SK-N-SH (cell line): ENCODE measurements at regions of chr10 and their contacts with region 1.

Region 1: DNA sequence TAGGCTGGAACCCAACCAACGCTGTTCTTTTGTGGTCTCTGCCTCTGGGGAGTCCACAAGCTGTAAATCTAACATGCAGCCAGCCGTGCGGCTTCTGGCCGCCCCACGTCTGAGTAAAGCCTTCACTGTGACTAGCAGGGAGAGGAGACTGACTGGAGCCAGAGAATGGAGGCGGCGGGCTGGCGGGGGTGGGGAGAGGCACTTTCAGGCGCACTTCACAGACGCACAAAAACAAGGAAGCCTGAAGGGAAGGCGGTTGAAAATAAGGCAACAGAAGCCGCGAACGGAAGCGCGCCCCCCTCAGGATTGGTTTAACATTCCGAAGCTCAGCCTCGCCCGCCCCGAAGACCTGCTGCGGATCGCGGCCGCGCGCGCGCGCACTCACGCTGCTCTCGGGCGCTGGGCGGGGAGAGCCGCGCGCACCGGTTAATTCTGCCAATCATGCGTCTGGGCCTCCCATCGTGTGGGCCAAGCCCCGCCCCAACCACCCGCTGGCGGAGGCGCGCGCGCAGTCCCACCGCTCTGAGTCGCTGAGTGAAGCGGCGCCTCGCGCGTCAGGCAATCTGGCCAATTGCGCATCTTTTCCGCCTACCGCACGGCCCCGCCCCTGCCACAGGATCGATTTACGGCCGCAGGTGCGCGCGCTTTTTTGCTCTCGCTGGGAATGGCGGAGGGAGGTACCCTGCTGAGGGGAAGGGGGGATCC is at the start of gene SFR1:
- DNase-seq: peak; percentile 96
- H3K4me3 ChIP-seq: peak within 1 kb of the TSS; percentile 96 to 98
- H3K27ac ChIP-seq: peak within 1 kb of the TSS; percentile 99 to 100
- H3K4me1 ChIP-seq: peaks cover 0 to 11% of the 10 kb centered on the region in 2 experiments; a peak in 3 of 4 replicates
- H3K27me3 ChIP-seq: no peaks in the 10 kb centered on the region
- CTCF ChIP-seq: peak; percentile 68
- EP300 ChIP-seq: peak; percentile 15 to 40; a peak in 2 of 4 replicates
- RAD21 ChIP-seq: peak; percentile 53
- polyA plus RNA-seq, gene SFR1: 1.5 and 1.8 TPM in 2 replicates

Region 2: GRCh38 chr10:103966671-103967447 is 154.8 kb before region 1 on chr10 and contains the start of gene SLK:
- CTCF ChIA-PET with region 1: interaction called, 11 read pairs
- POLR2A ChIA-PET with region 1: interaction called, 3 read pairs
- DNase-seq: peak; percentile 96
- H3K4me3 ChIP-seq: peak within 1 kb of the TSS; percentile 79 to 95
- H3K27ac ChIP-seq: peak within 1 kb of the TSS; percentile 74 to 90
- H3K4me1 ChIP-seq: peaks cover 9 to 10% of the 10 kb centered on the region in 2 experiments; a peak in 3 of 4 replicates
- H3K27me3 ChIP-seq: no peaks in the 10 kb centered on the region
- CTCF ChIP-seq: no peak
- EP300 ChIP-seq: no peak
- RAD21 ChIP-seq: no peak
- polyA plus RNA-seq, gene SLK: 3.4 and 4.0 TPM in 2 replicates

Region 3: GRCh38 chr10:104045151-104046089 is 76.3 kb before region 1 on chr10:
- CTCF ChIA-PET with region 1: interaction called, 11 read pairs
- POLR2A ChIA-PET with region 1: interaction called, 4 read pairs
- DNase-seq: peak; percentile 74
- H3K4me3 ChIP-seq: no peak overlapping the region
- H3K27ac ChIP-seq: no peak overlapping the region
- H3K4me1 ChIP-seq: peaks cover 0 to 2% of the 10 kb centered on the region in 2 experiments; a peak in 1 of 4 replicates
- H3K27me3 ChIP-seq: no peaks in the 10 kb centered on the region
- CTCF ChIP-seq: peak; percentile 77
- EP300 ChIP-seq: no peak
- RAD21 ChIP-seq: peak; percentile 89

Region 4: GRCh38 chr10:104104926-104105325 is 16.7 kb before region 1 on chr10:
- CTCF ChIA-PET with region 1: interaction called, 13 read pairs
- POLR2A ChIA-PET with region 1: no interaction called
- DNase-seq: no peak
- H3K4me3 ChIP-seq: no peak overlapping the region
- H3K27ac ChIP-seq: no peak overlapping the region
- H3K4me1 ChIP-seq: no peaks in the 10 kb centered on the region
- H3K27me3 ChIP-seq: no peaks in the 10 kb centered on the region
- CTCF ChIP-seq: no peak
- EP300 ChIP-seq: no peak
- RAD21 ChIP-seq: no peak

Region 5: DNA sequence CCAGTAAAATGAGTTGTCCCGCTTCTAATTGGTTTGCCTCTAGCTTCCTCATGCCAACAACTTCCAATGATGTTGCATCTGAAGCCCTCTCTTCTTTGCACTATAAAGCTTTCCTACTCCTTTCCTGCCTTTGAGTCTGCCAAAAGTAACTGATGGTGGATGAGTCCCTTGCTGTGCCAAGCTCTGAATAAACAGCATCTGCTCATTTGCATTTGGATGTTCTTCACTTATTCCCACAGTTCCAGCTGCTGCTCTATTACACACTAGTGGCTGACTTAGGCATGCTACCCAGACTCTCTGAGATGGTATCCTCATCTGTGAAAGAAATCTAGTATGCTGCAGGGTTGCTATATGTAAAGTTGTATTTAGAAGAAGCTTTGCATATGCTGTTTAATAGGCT is 25.2 kb after region 1 on chr10:
- CTCF ChIA-PET with region 1: interaction called, 10 read pairs
- POLR2A ChIA-PET with region 1: interaction called, 4 read pairs
- DNase-seq: no peak
- H3K4me3 ChIP-seq: no peak overlapping the region
- H3K27ac ChIP-seq: no peak overlapping the region
- H3K4me1 ChIP-seq: peaks cover 0 to 4% of the 10 kb centered on the region in 2 experiments; a peak in 2 of 4 replicates
- H3K27me3 ChIP-seq: peaks cover 8% of the 10 kb centered on the region; the same call in 1 of the 2 replicates
- CTCF ChIP-seq: no peak
- EP300 ChIP-seq: no peak
- RAD21 ChIP-seq: no peak

Region 6: GRCh38 chr10:104199567-104199966 is 77.9 kb after region 1 on chr10:
- CTCF ChIA-PET with region 1: interaction called, 11 read pairs
- POLR2A ChIA-PET with region 1: interaction called, 4 read pairs
- DNase-seq: no peak
- H3K4me3 ChIP-seq: no peak overlapping the region
- H3K27ac ChIP-seq: no peak overlapping the region
- H3K4me1 ChIP-seq: peaks cover 0 to 4% of the 10 kb centered on the region in 2 experiments; a peak in 1 of 4 replicates
- H3K27me3 ChIP-seq: no peaks in the 10 kb centered on the region
- CTCF ChIP-seq: no peak
- EP300 ChIP-seq: no peak
- RAD21 ChIP-seq: no peak

Region 7: GRCh38 chr10:104300736-104301292 is 179.1 kb after region 1 on chr10:
- CTCF ChIA-PET with region 1: no interaction called
- POLR2A ChIA-PET with region 1: no interaction called
- DNase-seq: peak; percentile 83
- H3K4me3 ChIP-seq: peak overlapping the region; percentile 9 to 15; a peak in 3 of 4 replicates
- H3K27ac ChIP-seq: peak overlapping the region; percentile 96 to 98
- H3K4me1 ChIP-seq: peaks cover 22 to 35% of the 10 kb centered on the region in 2 experiments
- H3K27me3 ChIP-seq: no peaks in the 10 kb centered on the region
- CTCF ChIP-seq: peak; percentile 39; the same call in 1 of the 2 replicates
- EP300 ChIP-seq: peak in 1 of 2 experiments; percentile 38; a peak in 1 of 4 replicates
- RAD21 ChIP-seq: peak; percentile 65

Region 8: GRCh38 chr10:104867966-104868598 is 746.4 kb after region 1 on chr10:
- CTCF ChIA-PET with region 1: no interaction called
- POLR2A ChIA-PET with region 1: no interaction called
- DNase-seq: no peak
- H3K4me3 ChIP-seq: no peak overlapping the region
- H3K27ac ChIP-seq: no peak overlapping the region
- H3K4me1 ChIP-seq: no peaks in the 10 kb centered on the region
- H3K27me3 ChIP-seq: no peaks in the 10 kb centered on the region
- CTCF ChIP-seq: no peak
- EP300 ChIP-seq: no peak
- RAD21 ChIP-seq: no peak